Prostate gland (tissue), 2 donors: ENCODE measurements at regions of chr9 and their contacts with region 1.

Region 1: DNA sequence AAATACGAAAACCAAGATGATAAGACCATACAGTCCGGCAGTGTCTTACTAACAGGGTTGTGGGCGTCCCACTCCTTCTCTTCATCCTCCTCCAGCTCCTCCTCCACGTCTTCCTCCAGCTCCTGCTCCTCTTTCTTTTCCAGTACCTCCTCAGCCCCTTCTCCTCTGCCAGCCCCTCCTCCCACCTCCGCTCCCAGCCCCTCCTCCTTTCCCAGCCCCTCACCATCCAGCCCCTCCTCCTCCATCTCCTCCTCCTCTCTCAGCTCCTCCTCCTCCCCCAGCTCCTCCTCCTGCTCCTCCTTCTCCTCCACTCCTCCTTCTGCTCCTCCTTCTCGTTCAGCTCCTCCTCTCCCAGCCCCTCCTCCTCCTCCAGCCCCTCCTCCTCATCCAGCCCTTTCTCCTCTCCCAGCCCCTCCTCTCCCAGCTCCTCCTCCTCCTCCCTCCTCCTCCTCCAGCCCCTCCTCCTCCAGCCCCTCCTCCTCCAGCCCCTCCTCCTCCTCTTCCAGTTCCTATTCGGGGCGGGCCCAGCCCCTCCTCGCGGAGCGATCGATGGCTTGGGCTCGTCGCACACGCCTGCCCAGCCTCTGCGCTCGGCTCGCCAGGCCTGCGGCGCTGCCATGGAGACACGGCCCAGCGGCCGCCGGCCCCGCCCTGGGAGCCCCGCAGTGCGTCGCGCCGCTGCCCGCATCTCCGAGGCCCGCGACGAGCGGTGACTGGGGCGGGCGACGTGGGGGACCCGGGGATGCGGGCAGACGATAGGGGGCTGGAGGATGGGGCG is at the start of gene BRD3OS:
- DNase-seq: peak; percentile 95
- H3K4me3 ChIP-seq: peak within 1 kb of the TSS; percentile 94 to 95
- H3K27ac ChIP-seq: peak within 1 kb of the TSS; percentile 65 to 73
- H3K4me1 ChIP-seq: no peaks in the 10 kb centered on the region
- H3K27me3 ChIP-seq: no peaks in the 10 kb centered on the region
- CTCF ChIP-seq: no peak
- POLR2A ChIP-seq: peak; percentile 33
- total RNA-seq, gene BRD3OS: 16.2 to 30.1 TPM

Region 2: DNA sequence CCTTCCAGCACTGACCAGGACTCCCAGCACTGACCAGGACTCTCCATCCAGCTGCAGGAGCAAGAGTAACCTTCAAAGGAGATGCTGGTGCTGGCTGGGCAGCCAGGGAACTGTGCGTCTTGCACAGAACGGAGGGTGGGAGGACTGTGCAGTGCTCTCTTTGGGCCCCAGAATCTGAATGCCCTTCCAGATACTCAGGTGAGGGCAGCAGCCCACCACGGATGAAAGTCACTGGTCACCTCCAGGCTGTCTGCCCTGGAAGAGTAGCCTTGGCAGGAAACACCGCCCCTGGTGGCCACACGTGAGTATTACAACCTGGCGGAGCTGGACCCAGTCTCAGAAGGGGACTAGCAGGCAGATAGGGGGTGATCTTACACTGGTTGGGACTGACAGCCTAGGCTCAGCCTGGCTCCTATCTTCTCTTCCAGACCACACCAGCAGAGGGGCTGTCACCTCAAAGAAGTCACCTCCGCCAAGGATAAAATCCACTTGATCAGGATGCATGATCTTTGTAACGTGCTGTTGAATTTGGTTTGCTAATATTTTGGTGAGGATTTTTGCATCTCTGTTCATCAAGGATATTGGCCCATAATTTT is 282.1 kb before region 1 on chr9:
- intact Hi-C with region 1: no loop called
- DNase-seq: peak; percentile 38
- H3K4me3 ChIP-seq: no peak overlapping the region
- H3K27ac ChIP-seq: no peak overlapping the region
- H3K4me1 ChIP-seq: peaks cover 3% of the 10 kb centered on the region
- H3K27me3 ChIP-seq: no peaks in the 10 kb centered on the region
- CTCF ChIP-seq: peak; percentile 85 to 92 (median 88)
- POLR2A ChIP-seq: no peak

Region 3: GRCh38 chr9:134135343-134136118 is 110.5 kb after region 1 on chr9 and contains the start of gene WDR5:
- intact Hi-C with region 1: loop called (anchors 10 kb)
- DNase-seq: peak; percentile 92
- H3K4me3 ChIP-seq: peak within 1 kb of the TSS; percentile 66 to 78
- H3K27ac ChIP-seq: peak within 1 kb of the TSS; percentile 86 to 92
- H3K4me1 ChIP-seq: peaks cover 36% of the 10 kb centered on the region
- H3K27me3 ChIP-seq: no peaks in the 10 kb centered on the region
- CTCF ChIP-seq: peak in 2 of 4 experiments; percentile 21 to 23
- POLR2A ChIP-seq: peak; percentile 39
- total RNA-seq, gene WDR5: 28.6 to 67.9 TPM